ENCODE measurements at regions of chr13 and their contacts with region 1.

Region 1: GRCh38 chr13:22278336-22278929 is 607.6 kb downstream of the FGF9 start:
- DNase-seq: peak; percentile 75
- ATAC-seq: peak; percentile 74
- H3K4me3 ChIP-seq: no peak overlapping the region
- H3K4me3 Mint-ChIP-seq: no peak overlapping the region
- H3K27ac ChIP-seq: no peak overlapping the region
- H3K27ac Mint-ChIP-seq: no peak overlapping the region
- H3K4me1 ChIP-seq: no peaks in the 10 kb centered on the region
- H3K4me1 Mint-ChIP-seq: peaks cover 6% of the 10 kb centered on the region
- H3K27me3 ChIP-seq: no peaks in the 10 kb centered on the region
- H3K27me3 Mint-ChIP-seq: no peaks in the 10 kb centered on the region
- CTCF ChIP-seq: peak; percentile 77

Region 2: GRCh38 chr13:22031702-22032286 is 246.6 kb before region 1 on chr13:
- CTCF ChIA-PET with region 1: no interaction called
- POLR2A ChIA-PET with region 1: no interaction called
- intact Hi-C with region 1: loop called (anchors 10 kb)
- DNase-seq: no peak
- ATAC-seq: no peak
- H3K4me3 ChIP-seq: no peak overlapping the region
- H3K4me3 Mint-ChIP-seq: no peak overlapping the region
- H3K27ac ChIP-seq: no peak overlapping the region
- H3K27ac Mint-ChIP-seq: no peak overlapping the region
- H3K4me1 ChIP-seq: no peaks in the 10 kb centered on the region
- H3K4me1 Mint-ChIP-seq: no peaks in the 10 kb centered on the region
- H3K27me3 ChIP-seq: no peaks in the 10 kb centered on the region
- H3K27me3 Mint-ChIP-seq: no peaks in the 10 kb centered on the region
- CTCF ChIP-seq: no peak

Region 3: GRCh38 chr13:22061351-22061805 is 217.1 kb before region 1 on chr13:
- CTCF ChIA-PET with region 1: interaction called, 9 read pairs
- POLR2A ChIA-PET with region 1: no interaction called
- intact Hi-C with region 1: loop called (anchors 5 kb)
- DNase-seq: no peak
- ATAC-seq: peak; percentile 42
- H3K4me3 ChIP-seq: peak overlapping the region in 2 of 5 experiments; percentile 25 to 34
- H3K4me3 Mint-ChIP-seq: peak overlapping the region; percentile 58
- H3K27ac ChIP-seq: peak overlapping the region; percentile 69 to 81
- H3K27ac Mint-ChIP-seq: peak overlapping the region; percentile 89
- H3K4me1 ChIP-seq: peaks cover 35% of the 10 kb centered on the region in 2 donors
- H3K4me1 Mint-ChIP-seq: peaks cover 49% of the 10 kb centered on the region
- H3K27me3 ChIP-seq: no peaks in the 10 kb centered on the region
- H3K27me3 Mint-ChIP-seq: no peaks in the 10 kb centered on the region
- CTCF ChIP-seq: no peak